ENCODE measurements at regions of chr6 and their contacts with region 1.

Region 1: GRCh38 chr6:122184401-122184827 is 215.0 kb upstream of the HSF2 start:
- DNase-seq: no peak
- H3K4me3 ChIP-seq: peak overlapping the region; percentile 8 to 42 (median 24)
- H3K27ac ChIP-seq: peak overlapping the region in 3 of 4 donors; percentile 13 to 42 (median 31)
- H3K4me1 ChIP-seq: peaks cover 0 to 28% (median 12%) of the 10 kb centered on the region in 4 donors
- H3K27me3 ChIP-seq: no peaks in the 10 kb centered on the region
- CTCF ChIP-seq: peak; percentile 59 to 67 (median 64)
- EP300 ChIP-seq: no peak
- POLR2A ChIP-seq: no peak

Region 2: DNA sequence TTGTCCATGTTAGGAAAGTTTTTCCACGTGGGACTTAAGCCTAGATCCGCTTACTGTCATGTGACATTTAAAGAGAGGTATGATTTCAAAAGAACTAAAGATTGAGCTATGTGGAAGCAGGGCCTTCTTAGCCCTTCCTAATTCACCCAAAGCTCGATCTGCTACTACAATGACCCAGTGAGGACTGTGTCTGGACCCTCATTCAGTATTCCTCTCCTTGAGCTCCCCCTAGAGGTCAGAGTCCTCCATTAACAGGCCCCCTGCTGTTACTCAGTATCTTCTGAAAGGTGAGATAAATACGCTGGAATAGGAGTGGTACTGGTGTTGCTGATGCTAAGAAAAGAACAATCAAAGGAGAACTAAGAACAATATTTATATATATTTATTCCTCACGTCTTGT is 334.9 kb before region 1 on chr6:
- intact Hi-C with region 1: loop called (anchors 5 kb)
- DNase-seq: no peak
- H3K4me3 ChIP-seq: no peak overlapping the region
- H3K27ac ChIP-seq: no peak overlapping the region
- H3K4me1 ChIP-seq: peaks cover 2 to 16% (median 7%) of the 10 kb centered on the region in 4 donors
- H3K27me3 ChIP-seq: no peaks in the 10 kb centered on the region
- CTCF ChIP-seq: peak; percentile 40 to 59 (median 48)
- EP300 ChIP-seq: no peak
- POLR2A ChIP-seq: no peak

Region 3: GRCh38 chr6:122042960-122043735 is 141.3 kb before region 1 on chr6:
- intact Hi-C with region 1: loop called (anchors 5 kb)
- DNase-seq: no peak
- H3K4me3 ChIP-seq: peak overlapping the region in 1 of 4 donors; percentile 0
- H3K27ac ChIP-seq: peak overlapping the region; percentile 72 to 77 (median 74)
- H3K4me1 ChIP-seq: peaks cover 10 to 48% (median 36%) of the 10 kb centered on the region in 4 donors
- H3K27me3 ChIP-seq: no peaks in the 10 kb centered on the region
- CTCF ChIP-seq: no peak
- EP300 ChIP-seq: no peak
- POLR2A ChIP-seq: no peak

Region 4: GRCh38 chr6:122222761-122223160 is 38.3 kb after region 1 on chr6:
- intact Hi-C with region 1: no loop called
- DNase-seq: no peak
- H3K4me3 ChIP-seq: no peak overlapping the region
- H3K27ac ChIP-seq: no peak overlapping the region
- H3K4me1 ChIP-seq: no peaks in the 10 kb centered on the region
- H3K27me3 ChIP-seq: no peaks in the 10 kb centered on the region
- CTCF ChIP-seq: no peak
- EP300 ChIP-seq: no peak
- POLR2A ChIP-seq: no peak

Measured in esophagus muscularis mucosa (tissue), 4 donors.